ENCODE measurements at regions of chr14 and their contacts with region 1.

Region 1: DNA sequence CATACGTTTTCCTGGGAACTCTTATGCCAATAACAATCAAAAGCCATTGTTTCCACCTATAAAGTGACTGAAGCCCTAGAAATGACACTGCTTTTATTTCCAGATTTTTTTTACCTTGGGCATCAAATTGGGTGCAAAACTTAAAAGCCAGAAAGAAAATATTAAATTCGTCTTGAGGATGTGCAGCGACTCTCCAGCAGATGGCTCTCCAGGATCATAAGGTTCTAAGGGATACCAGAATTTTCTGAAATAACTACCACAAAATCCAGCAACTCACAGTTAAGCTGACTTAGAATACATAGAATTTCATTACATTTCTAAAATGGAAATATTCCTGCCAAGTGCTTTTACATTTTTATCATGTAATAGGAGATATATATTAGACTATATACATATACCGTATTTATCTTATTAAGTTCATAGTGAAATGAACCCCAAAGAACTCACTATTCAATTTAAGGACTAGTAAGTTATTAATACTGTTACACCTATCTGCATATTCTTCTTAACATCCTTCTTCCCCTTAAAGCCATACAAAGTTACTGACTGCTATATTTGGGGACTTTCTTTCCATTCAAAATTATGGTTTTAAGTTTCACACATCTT is 44.0 kb downstream of the ARMH4 start:
- DNase-seq: peak; percentile 32
- H3K4me3 ChIP-seq: no peak overlapping the region
- H3K27ac ChIP-seq: no peak overlapping the region
- H3K4me1 ChIP-seq: no peaks in the 10 kb centered on the region
- H3K27me3 ChIP-seq: no peaks in the 10 kb centered on the region
- CTCF ChIP-seq: peak; percentile 75 to 81

Region 2: GRCh38 chr14:57918791-57919190 is 189.3 kb before region 1 on chr14:
- CTCF ChIA-PET with region 1: no interaction called
- dilution Hi-C with region 1: no loop called
- in situ Hi-C with region 1: no loop called
- intact Hi-C with region 1: no loop called
- DNase-seq: peak; percentile 5
- H3K4me3 ChIP-seq: no peak overlapping the region
- H3K27ac ChIP-seq: no peak overlapping the region
- H3K4me1 ChIP-seq: no peaks in the 10 kb centered on the region
- H3K27me3 ChIP-seq: no peaks in the 10 kb centered on the region
- CTCF ChIP-seq: no peak

Region 3: GRCh38 chr14:58027909-58028308 is 80.1 kb before region 1 on chr14:
- CTCF ChIA-PET with region 1: no interaction called
- dilution Hi-C with region 1: no loop called
- in situ Hi-C with region 1: no loop called
- intact Hi-C with region 1: no loop called
- DNase-seq: no peak
- H3K4me3 ChIP-seq: no peak overlapping the region
- H3K27ac ChIP-seq: no peak overlapping the region
- H3K4me1 ChIP-seq: no peaks in the 10 kb centered on the region
- H3K27me3 ChIP-seq: no peaks in the 10 kb centered on the region
- CTCF ChIP-seq: no peak

Region 4: DNA sequence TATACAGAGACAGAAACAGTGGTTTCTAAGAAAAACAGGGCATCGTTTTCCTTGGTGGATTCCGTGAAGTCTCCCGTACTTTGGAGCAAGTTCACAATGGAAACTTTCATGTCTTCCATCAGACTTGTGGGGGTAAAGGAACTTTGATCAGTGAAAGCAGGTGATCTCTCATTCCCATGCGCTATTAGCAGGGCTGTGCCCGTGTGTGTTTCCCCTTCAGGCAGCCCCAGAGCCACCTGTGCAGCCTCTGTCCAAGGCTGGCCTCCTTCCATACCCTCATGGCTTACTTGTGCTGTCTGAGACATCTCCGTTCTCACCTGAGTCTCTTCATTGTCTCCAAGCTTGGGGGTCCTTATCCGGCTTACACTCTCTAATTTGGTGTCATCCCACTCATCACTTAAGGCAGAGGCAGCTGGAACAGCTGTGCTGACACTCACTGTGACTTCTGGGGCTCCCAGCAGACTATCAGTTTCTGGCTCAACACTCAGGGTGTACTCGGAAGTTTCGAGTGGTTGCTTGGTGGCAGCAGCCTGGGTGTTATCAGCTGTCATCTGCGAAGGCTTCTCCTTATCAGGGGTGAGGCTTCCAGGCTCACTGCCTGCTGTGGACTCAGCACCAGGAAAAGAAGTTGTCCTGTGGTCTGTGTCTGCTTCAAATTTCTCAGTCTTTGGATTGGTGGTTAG is 30.1 kb after region 1 on chr14:
- CTCF ChIA-PET with region 1: no interaction called
- dilution Hi-C with region 1: no loop called
- in situ Hi-C with region 1: no loop called
- intact Hi-C with region 1: no loop called
- DNase-seq: no peak
- H3K4me3 ChIP-seq: no peak overlapping the region
- H3K27ac ChIP-seq: no peak overlapping the region
- H3K4me1 ChIP-seq: peaks cover 8% of the 10 kb centered on the region
- H3K27me3 ChIP-seq: no peaks in the 10 kb centered on the region
- CTCF ChIP-seq: no peak

Region 5: DNA sequence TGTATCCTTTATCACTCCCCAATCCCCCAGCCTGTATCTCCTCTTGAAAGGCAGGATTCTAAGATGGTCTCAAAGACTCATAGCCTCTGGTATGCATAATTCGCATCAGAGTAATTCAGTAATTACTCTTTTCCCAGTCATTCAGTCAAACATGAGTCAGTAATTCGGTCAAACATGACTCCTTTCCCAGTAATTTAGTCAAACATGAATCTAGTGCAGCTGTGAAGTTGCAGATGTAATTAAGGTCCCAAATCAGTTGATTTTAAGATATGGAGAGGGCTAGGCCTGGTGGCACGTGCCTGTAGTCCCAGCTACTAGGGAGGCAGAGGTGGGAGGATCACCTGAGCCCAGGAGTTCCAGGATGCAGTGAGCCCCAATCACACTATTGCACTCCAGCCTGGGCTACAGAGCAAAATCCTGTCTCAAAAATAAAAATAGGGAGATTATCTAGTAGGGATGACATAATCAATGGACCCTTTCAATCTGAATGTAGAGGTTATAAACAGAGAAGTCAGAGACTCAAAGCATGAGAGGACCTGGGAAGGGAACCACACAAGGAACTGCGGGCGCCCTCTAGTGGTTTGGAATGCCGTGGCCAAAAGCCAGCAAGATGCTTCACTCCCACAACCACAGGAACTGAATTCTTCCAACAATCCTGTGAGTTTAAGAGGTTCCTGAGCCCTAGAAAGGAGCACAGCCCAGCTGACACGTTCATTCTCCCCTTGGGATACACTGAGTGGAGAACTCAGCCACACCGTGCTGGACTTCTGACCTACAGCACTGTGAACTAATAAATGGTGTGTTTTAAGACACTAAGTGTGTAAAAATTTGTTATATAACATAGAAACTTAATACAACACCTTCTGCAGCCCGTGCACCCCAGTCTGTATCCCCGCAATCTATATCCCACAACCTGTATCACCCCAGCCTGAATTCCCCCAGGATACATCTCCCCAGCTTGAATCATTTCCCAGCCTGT is 58.2 kb after region 1 on chr14:
- CTCF ChIA-PET with region 1: interaction called, 3 read pairs
- dilution Hi-C with region 1: no loop called
- in situ Hi-C with region 1: no loop called
- intact Hi-C with region 1: loop called (anchors 1 kb)
- DNase-seq: peak; percentile 56
- H3K4me3 ChIP-seq: no peak overlapping the region
- H3K27ac ChIP-seq: no peak overlapping the region
- H3K4me1 ChIP-seq: peaks cover 15% of the 10 kb centered on the region
- H3K27me3 ChIP-seq: no peaks in the 10 kb centered on the region
- CTCF ChIP-seq: peak; percentile 90 to 97

Region 6: DNA sequence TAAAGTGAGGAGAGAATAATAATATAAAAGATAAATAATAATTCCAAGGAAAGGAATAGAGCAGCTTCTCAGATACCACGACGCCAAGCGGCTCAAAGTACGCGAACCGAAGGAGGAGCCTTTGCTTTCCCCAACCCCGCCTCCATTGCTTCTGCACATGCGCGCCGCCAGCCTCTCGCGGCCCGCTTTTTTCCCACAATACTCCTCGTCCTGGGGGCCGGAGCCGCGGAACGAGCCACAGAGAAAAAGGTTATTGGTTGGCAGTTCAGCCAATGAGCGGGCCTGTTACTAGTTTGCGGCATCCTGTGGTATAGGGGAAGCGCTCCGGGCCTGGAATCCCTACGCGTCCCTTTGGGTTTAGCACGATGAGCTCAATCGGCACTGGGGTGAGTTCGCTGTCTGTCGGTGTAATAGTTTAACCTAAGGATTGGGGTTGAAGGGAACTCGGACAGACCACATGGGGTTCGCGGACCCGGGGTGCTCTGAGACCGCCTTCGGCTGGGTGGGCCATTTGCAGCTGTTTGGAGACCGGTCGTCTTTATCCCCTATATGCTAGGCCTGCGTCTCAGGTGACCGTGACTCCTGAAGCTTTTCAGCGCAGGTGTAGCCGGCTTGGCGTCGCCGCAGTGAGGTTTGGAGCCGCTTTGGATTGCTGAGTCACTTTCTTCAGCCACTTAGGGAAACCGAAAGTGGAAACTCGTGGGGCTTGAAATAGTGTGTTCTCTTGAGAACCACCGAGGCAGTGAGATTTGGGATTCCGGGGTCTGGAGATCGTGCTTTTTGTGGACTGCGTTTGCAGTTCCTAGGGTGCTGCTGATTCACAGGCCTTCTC is 136.7 kb after region 1 on chr14 and contains the start of gene PSMA3:
- CTCF ChIA-PET with region 1: no interaction called
- dilution Hi-C with region 1: no loop called
- in situ Hi-C with region 1: no loop called
- intact Hi-C with region 1: loop called (anchors 1 kb)
- DNase-seq: peak; percentile 98
- H3K4me3 ChIP-seq: peak within 1 kb of the TSS; percentile 81 to 100 (median 96)
- H3K27ac ChIP-seq: peak within 1 kb of the TSS; percentile 93
- H3K4me1 ChIP-seq: peaks cover 18% of the 10 kb centered on the region
- H3K27me3 ChIP-seq: no peaks in the 10 kb centered on the region
- CTCF ChIP-seq: peak in 1 of 2 donors; percentile 16
- total RNA-seq, gene PSMA3: 69.8 to 157 TPM

Region 7: DNA sequence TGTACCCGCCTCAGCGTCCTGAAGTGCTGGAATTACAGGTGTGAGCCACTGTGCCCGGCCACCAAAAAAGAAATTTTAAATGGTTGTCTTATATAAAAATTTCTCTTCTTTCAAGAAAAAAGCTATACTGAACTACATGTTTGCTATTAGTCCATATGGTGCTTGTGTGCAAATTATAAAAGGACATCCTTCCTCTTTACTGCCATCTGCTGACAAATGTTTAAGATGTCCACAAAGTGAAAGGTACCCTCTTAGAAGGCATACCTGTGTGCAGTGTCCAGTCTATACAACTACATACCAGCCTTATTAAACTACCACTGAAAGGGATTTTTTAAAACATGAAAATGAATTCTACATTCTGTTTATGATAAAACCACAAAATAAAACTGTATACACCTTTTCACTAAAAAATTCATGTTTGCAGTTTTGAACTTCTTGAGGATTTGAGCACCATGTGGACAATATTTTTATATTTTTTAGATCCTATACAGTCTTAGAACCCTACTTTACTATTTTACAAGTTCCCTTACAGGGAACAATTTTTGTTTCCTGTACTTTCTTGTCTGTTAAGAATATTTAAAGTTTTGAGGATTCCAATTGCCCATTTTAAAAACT is 254.9 kb after region 1 on chr14:
- CTCF ChIA-PET with region 1: no interaction called
- dilution Hi-C with region 1: no loop called
- in situ Hi-C with region 1: loop called (anchors 25 kb)
- intact Hi-C with region 1: loop called (anchors 1 kb)
- DNase-seq: peak; percentile 29
- H3K4me3 ChIP-seq: no peak overlapping the region
- H3K27ac ChIP-seq: no peak overlapping the region
- H3K4me1 ChIP-seq: no peaks in the 10 kb centered on the region
- H3K27me3 ChIP-seq: no peaks in the 10 kb centered on the region
- CTCF ChIP-seq: peak; percentile 31 to 43

Region 8: DNA sequence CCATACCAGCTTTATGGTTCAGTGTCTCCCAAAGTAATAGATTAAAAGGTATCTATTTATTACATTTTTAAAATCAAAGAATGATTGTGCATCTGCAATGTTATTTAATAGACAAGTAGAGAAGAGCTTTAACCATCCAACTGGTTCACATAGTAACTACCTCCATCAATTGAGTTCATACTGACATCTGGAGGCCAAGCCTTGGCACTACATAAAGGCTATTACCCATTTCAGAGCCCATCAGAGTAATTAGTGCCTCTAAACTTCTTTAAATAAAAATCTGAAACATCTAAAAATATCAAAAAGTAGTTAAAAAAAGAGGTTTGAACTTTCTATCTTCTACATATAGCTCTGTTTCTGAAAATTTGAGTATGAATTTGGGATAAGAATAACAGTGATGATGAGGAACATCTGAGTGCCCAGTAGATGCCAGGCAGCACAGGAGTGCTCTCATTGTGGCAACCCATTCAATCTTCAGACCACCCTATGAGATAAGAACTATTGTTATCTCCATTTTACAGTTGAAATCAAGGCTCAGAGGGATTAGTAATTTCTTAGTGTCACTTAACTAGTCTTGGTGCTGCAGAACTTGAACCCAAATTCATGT is 947.5 kb after region 1 on chr14:
- CTCF ChIA-PET with region 1: no interaction called
- dilution Hi-C with region 1: no loop called
- in situ Hi-C with region 1: loop called in 1 of 2 experiments (anchors 25 kb)
- intact Hi-C with region 1: no loop called
- DNase-seq: peak; percentile 31
- H3K4me3 ChIP-seq: no peak overlapping the region
- H3K27ac ChIP-seq: no peak overlapping the region
- H3K4me1 ChIP-seq: no peaks in the 10 kb centered on the region
- H3K27me3 ChIP-seq: no peaks in the 10 kb centered on the region
- CTCF ChIP-seq: peak; percentile 70 to 84

Measured in mammary epithelial cell (primary cell).